ENCODE measurements at regions of chr5 and their contacts with region 1.

Region 1: GRCh38 chr5:94111209-94112004 is 370.0 kb upstream of the POU5F2 start:
- DNase-seq: peak; percentile 96
- H3K4me3 Mint-ChIP-seq: peak overlapping the region; percentile 92
- H3K27ac Mint-ChIP-seq: peak overlapping the region; percentile 85
- H3K4me1 Mint-ChIP-seq: peaks cover 26% of the 10 kb centered on the region
- H3K27me3 Mint-ChIP-seq: no peaks in the 10 kb centered on the region

Region 2: DNA sequence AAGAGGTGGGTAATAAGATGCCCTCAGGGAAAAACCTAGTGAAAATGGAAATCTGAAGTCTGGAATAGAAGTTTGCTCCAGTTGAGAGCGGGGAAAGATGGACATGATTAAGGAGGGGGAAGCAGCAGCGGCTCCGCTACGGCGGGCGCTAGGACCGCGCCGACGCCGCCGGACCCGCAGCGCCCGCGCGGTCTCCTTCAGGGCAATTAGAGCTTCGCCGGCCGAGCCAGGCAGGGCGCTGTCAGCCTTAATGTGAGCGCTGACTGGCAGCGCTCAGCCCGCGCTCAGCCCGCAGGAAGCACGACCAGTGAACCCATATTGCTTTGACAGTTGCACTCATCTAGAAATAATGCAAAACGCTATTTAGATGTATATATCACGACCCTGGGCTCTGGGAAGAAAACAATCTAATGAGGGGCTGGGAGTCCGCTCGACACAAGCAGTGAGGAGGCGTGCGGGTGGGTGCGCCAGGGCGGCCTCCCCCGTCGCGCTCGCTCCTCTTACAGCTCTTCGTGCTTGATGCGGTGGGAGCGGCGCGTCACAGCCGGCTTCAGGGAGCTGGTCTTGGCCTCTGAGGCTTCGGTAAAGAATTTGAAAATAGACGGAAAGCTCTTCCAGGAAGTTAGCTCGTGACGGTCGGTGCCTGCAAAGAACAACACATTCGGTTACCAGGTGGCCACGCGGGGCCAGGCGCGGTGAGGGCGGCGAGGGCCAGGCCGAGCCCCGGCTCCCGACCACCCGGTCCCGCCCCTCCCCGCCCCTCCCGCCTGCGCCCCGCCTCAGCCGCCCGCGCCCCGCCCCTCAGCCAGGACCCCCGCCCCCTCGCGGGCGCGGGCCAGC is 490.7 kb before region 1 on chr5:
- CTCF ChIA-PET with region 1: no interaction called
- POLR2A ChIA-PET with region 1: no interaction called
- intact Hi-C with region 1: loop called (anchors 10 kb)
- DNase-seq: peak; percentile 67
- H3K4me3 Mint-ChIP-seq: peak overlapping the region; percentile 81
- H3K27ac Mint-ChIP-seq: peak overlapping the region; percentile 15
- H3K4me1 Mint-ChIP-seq: peaks cover 32% of the 10 kb centered on the region
- H3K27me3 Mint-ChIP-seq: peaks cover 19% of the 10 kb centered on the region

Region 3: GRCh38 chr5:93915142-93915553 is 196.3 kb before region 1 on chr5:
- CTCF ChIA-PET with region 1: no interaction called
- POLR2A ChIA-PET with region 1: no interaction called
- intact Hi-C with region 1: loop called (anchors 10 kb)
- DNase-seq: no peak
- H3K4me3 Mint-ChIP-seq: no peak overlapping the region
- H3K27ac Mint-ChIP-seq: no peak overlapping the region
- H3K4me1 Mint-ChIP-seq: no peaks in the 10 kb centered on the region
- H3K27me3 Mint-ChIP-seq: no peaks in the 10 kb centered on the region

Measured in activated CD4-positive, alpha-beta memory T cell treated with anti-CD3 and anti-CD28 coated beads for 36 hours (primary cell).